MCF 10A (cell line): ENCODE measurements at regions of chr2 and their contacts with region 1.

Region 1: DNA sequence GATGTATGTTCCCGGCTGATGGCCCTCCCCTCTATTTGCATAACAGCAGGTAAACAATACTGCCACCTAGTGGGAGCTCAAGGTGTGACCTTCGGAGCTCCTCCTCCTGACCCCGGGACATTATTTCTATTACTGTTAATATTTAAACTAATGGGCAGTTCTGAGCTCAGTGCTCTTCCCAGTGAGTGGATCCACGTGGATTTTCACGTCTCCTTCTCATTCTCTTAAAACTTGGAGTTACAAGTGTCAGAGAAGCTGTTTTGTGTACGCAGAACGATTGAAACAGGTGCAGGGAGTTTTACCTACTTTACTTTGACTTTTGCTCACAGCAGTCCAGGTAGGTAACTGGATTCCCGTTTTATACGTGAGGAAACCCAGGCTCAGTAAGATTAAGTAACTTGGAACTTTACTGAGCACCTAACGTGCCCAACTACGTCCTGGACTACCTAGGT is 127.3 kb downstream of the PRKCE start:
- DNase-seq: peak; percentile 75
- H3K4me3 Mint-ChIP-seq: no peak overlapping the region
- H3K27ac Mint-ChIP-seq: no peak overlapping the region
- H3K4me1 Mint-ChIP-seq: peaks cover 7% of the 10 kb centered on the region
- H3K27me3 Mint-ChIP-seq: no peaks in the 10 kb centered on the region
- CTCF ChIP-seq: peak; percentile 72

Region 2: GRCh38 chr2:45585267-45585861 is 193.4 kb before region 1 on chr2:
- CTCF ChIA-PET with region 1: no interaction called
- POLR2A ChIA-PET with region 1: no interaction called
- intact Hi-C with region 1: loop called (anchors 2 kb)
- DNase-seq: peak; percentile 59
- H3K4me3 Mint-ChIP-seq: no peak overlapping the region
- H3K27ac Mint-ChIP-seq: no peak overlapping the region
- H3K4me1 Mint-ChIP-seq: peaks cover 7% of the 10 kb centered on the region
- H3K27me3 Mint-ChIP-seq: no peaks in the 10 kb centered on the region
- CTCF ChIP-seq: peak; percentile 54

Region 3: DNA sequence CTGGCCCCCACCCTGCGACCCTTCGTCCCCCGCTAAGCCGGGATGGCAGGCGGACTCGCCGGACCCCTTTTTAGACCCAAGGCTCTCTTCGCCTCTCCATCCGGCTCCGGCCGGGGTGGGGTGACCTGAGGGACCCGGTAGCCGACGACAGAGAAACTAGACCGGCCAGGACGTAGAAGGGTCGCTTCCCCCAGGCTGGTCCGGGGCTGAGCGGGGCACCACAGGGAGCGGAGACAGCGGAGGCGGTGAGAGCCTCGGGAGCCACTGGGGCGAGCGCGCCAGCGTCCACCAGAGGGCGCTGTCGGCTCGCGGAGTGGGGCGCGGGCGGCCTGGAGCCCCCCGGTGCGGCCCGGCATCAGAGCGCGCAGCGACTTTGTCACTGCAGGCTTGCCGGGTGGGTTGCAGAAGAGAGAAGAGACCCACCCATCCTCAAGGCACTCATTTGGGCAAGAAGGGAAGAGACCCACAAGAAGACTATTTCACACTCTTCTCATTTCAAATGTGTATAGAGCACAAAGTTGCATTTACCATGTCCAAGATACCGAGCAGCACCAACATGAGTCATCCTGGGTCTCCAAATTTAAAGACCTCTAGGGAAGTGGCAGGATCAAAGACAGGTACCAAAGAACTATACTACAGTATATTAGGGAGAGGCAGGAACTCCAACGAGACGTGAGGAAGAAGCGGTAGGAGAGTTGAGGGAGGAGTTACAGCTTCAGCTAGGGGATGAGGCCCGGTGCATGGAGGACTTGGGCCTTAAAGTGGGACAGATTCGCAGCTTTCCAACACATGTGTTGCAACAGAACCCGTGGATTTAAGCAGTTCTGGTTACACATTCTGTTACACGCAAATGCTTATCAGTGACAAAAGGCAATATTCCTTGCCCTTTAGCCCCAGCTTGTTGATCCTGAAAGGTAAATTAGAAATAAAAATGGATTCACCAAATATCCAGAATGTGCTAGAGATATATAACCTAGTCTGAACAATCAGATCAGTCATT is 134.9 kb before region 1 on chr2:
- CTCF ChIA-PET with region 1: interaction called, 6 read pairs
- POLR2A ChIA-PET with region 1: interaction called, 8 read pairs
- intact Hi-C with region 1: loop called (anchors 1 kb)
- DNase-seq: peak; percentile 62
- H3K4me3 Mint-ChIP-seq: peak overlapping the region; percentile 73
- H3K27ac Mint-ChIP-seq: peak overlapping the region; percentile 37
- H3K4me1 Mint-ChIP-seq: peaks cover 17% of the 10 kb centered on the region
- H3K27me3 Mint-ChIP-seq: no peaks in the 10 kb centered on the region
- CTCF ChIP-seq: peak; percentile 96

Region 4: GRCh38 chr2:45793305-45793962 is 14.7 kb after region 1 on chr2:
- CTCF ChIA-PET with region 1: interaction called, 20 read pairs
- POLR2A ChIA-PET with region 1: interaction called, 4 read pairs
- intact Hi-C with region 1: no loop called
- DNase-seq: no peak
- H3K4me3 Mint-ChIP-seq: no peak overlapping the region
- H3K27ac Mint-ChIP-seq: no peak overlapping the region
- H3K4me1 Mint-ChIP-seq: no peaks in the 10 kb centered on the region
- H3K27me3 Mint-ChIP-seq: no peaks in the 10 kb centered on the region
- CTCF ChIP-seq: no peak

Region 5: DNA sequence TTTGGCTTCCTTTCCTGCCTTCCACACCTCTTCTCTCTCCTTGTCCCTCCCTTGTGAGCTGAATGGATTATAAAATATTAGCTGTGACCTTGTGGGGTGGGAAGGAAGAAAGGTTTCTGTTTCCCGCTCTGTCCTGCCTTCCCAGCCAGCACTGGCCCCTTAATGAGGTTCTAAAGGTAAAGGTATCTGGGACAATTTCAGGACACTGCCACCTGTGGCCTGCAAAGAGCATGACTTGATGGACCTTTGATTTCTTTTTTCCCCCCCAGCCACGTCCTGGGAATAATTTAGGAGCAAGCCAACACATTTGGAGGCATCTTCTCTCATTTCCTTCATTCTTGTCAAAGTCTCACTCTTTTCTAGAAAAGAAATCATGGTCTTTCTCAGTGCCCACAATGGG is 271.7 kb after region 1 on chr2:
- CTCF ChIA-PET with region 1: no interaction called
- POLR2A ChIA-PET with region 1: no interaction called
- intact Hi-C with region 1: no loop called
- DNase-seq: no peak
- H3K4me3 Mint-ChIP-seq: no peak overlapping the region
- H3K27ac Mint-ChIP-seq: no peak overlapping the region
- H3K4me1 Mint-ChIP-seq: no peaks in the 10 kb centered on the region
- H3K27me3 Mint-ChIP-seq: no peaks in the 10 kb centered on the region
- CTCF ChIP-seq: no peak